ENCODE measurements at regions of chr3 and their contacts with region 1.

Region 1: GRCh38 chr3:150787741-150788370 is 24.9 kb upstream of the SIAH2 start:
- DNase-seq: peak; percentile 58 to 78 (median 65)
- H3K4me3 ChIP-seq: no peak overlapping the region
- H3K4me3 Mint-ChIP-seq: peak overlapping the region in 4 of 8 donors; percentile 0 to 40 (median 22)
- H3K27ac ChIP-seq: no peak overlapping the region
- H3K27ac Mint-ChIP-seq: peak overlapping the region in 1 of 7 donors; percentile 58
- H3K4me1 ChIP-seq: peaks cover 5% of the 10 kb centered on the region
- H3K4me1 Mint-ChIP-seq: peaks cover 0 to 5% (median 4%) of the 10 kb centered on the region in 4 donors
- H3K27me3 ChIP-seq: no peaks in the 10 kb centered on the region
- H3K27me3 Mint-ChIP-seq: peaks cover 4 to 7% of the 10 kb centered on the region in 2 donors

Region 2: GRCh38 chr3:150643049-150643448 is 144.8 kb before region 1 on chr3:
- CTCF ChIA-PET with region 1: no interaction called
- POLR2A ChIA-PET with region 1: no interaction called
- intact Hi-C with region 1: no loop called
- DNase-seq: no peak
- H3K4me3 ChIP-seq: no peak overlapping the region
- H3K4me3 Mint-ChIP-seq: no peak overlapping the region
- H3K27ac ChIP-seq: no peak overlapping the region
- H3K27ac Mint-ChIP-seq: no peak overlapping the region
- H3K4me1 ChIP-seq: no peaks in the 10 kb centered on the region
- H3K4me1 Mint-ChIP-seq: no peaks in the 10 kb centered on the region
- H3K27me3 ChIP-seq: no peaks in the 10 kb centered on the region
- H3K27me3 Mint-ChIP-seq: peaks cover 0 to 2% of the 10 kb centered on the region in 2 donors

Region 3: GRCh38 chr3:150721285-150722130 is 66.3 kb before region 1 on chr3:
- CTCF ChIA-PET with region 1: interaction called, 26 read pairs
- POLR2A ChIA-PET with region 1: interaction called, 3 read pairs
- intact Hi-C with region 1: loop called (anchors 1 kb)
- DNase-seq: peak in 4 of 5 donors; percentile 67 to 75 (median 68)
- H3K4me3 ChIP-seq: no peak overlapping the region
- H3K4me3 Mint-ChIP-seq: peak overlapping the region in 1 of 8 donors; percentile 48
- H3K27ac ChIP-seq: no peak overlapping the region
- H3K27ac Mint-ChIP-seq: peak overlapping the region in 2 of 7 donors; percentile 11 to 53
- H3K4me1 ChIP-seq: peaks cover 12% of the 10 kb centered on the region
- H3K4me1 Mint-ChIP-seq: peaks cover 6 to 11% (median 8%) of the 10 kb centered on the region in 4 donors
- H3K27me3 ChIP-seq: no peaks in the 10 kb centered on the region
- H3K27me3 Mint-ChIP-seq: no peaks in the 10 kb centered on the region

Region 4: DNA sequence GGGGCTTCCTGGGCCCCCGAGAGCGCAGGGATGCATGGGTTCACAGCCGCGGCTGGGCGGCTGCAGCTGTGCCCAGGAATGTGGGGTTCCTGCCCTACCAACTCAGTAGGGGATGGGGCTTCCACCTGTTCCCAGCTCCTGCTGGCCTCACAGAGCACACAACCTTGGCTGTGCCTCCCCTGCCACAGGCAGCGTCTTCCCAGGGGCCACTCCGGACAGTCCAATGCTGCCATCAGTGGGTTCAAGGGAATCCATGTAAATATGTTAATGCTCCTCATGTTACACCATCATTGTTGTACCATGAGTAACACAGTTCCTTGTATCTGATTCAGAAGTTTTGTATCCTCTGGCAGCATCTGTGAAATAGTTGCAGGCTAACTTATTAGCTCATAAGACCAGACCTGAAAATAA is 12.8 kb before region 1 on chr3:
- CTCF ChIA-PET with region 1: interaction called, 17 read pairs
- POLR2A ChIA-PET with region 1: no interaction called
- intact Hi-C with region 1: no loop called
- DNase-seq: no peak
- H3K4me3 ChIP-seq: no peak overlapping the region
- H3K4me3 Mint-ChIP-seq: no peak overlapping the region
- H3K27ac ChIP-seq: no peak overlapping the region
- H3K27ac Mint-ChIP-seq: no peak overlapping the region
- H3K4me1 ChIP-seq: no peaks in the 10 kb centered on the region
- H3K4me1 Mint-ChIP-seq: no peaks in the 10 kb centered on the region
- H3K27me3 ChIP-seq: no peaks in the 10 kb centered on the region
- H3K27me3 Mint-ChIP-seq: no peaks in the 10 kb centered on the region

Region 5: DNA sequence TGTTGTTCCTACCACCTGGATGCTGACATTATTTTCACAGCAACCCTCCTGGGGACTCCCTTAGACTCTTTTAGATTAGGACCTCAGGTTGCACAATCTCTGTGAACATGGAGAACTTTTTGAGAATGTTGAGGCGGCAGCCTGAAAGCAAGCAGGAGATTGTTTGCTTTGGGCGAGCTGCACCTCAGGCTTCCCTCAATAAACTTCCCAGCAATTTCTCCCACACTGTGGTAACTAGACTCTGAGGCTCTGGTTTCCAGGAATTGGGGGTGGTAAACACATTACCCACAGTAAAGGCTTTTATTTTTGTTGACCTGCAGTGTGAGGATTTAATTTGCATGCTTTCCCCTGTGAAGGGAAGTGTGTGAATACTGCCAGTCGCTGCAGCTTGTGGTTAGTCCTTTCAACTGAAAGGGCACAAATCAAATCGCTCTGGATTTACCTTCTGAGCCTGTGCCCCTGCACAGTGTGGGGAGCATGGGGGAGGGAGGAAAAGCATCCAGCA is 10.3 kb after region 1 on chr3:
- CTCF ChIA-PET with region 1: interaction called, 20 read pairs
- POLR2A ChIA-PET with region 1: no interaction called
- intact Hi-C with region 1: no loop called
- DNase-seq: no peak
- H3K4me3 ChIP-seq: no peak overlapping the region
- H3K4me3 Mint-ChIP-seq: no peak overlapping the region
- H3K27ac ChIP-seq: no peak overlapping the region
- H3K27ac Mint-ChIP-seq: no peak overlapping the region
- H3K4me1 ChIP-seq: no peaks in the 10 kb centered on the region
- H3K4me1 Mint-ChIP-seq: peaks cover 0 to 5% (median 1%) of the 10 kb centered on the region in 4 donors
- H3K27me3 ChIP-seq: no peaks in the 10 kb centered on the region
- H3K27me3 Mint-ChIP-seq: peaks cover 4 to 12% of the 10 kb centered on the region in 2 donors

Region 6: DNA sequence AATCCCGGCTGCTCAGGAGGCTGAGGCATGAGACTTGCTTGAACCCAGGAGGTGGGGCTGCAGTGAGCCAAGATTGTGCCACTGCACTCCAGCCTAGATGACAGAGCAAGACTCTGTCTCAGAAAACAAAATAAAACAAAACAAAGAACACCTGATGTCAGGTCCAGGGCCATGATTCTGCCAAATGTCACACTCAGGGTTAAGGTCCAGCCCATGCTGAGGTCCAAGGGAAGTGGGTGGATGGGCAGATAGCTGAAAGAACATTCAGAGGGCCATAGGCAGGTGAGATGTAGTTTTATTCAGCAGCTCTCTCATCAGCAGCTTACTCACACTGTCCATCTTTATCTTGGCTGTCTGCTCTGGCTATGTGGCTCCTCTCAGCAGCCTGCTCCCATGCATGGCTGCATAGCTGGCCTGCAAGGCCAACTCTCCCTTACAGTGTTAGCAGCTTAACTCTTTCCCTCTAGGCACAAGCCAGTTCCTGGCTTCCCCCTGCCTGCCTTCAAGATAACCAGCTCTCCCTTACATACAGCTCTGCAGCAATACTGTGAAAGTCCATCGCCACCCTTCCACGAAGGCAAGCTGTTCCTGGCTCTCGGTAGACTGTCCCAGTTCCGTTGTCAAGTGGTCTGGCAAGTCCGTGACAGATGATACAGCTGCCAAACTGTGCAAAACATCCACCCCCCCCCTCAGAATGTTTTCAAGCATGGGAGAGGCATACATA is 37.5 kb after region 1 on chr3:
- CTCF ChIA-PET with region 1: interaction called, 16 read pairs
- POLR2A ChIA-PET with region 1: no interaction called
- intact Hi-C with region 1: no loop called
- DNase-seq: no peak
- H3K4me3 ChIP-seq: no peak overlapping the region
- H3K4me3 Mint-ChIP-seq: no peak overlapping the region
- H3K27ac ChIP-seq: no peak overlapping the region
- H3K27ac Mint-ChIP-seq: peak overlapping the region in 1 of 7 donors; percentile 12
- H3K4me1 ChIP-seq: no peaks in the 10 kb centered on the region
- H3K4me1 Mint-ChIP-seq: no peaks in the 10 kb centered on the region
- H3K27me3 ChIP-seq: no peaks in the 10 kb centered on the region
- H3K27me3 Mint-ChIP-seq: peaks cover 6 to 12% of the 10 kb centered on the region in 2 donors

Region 7: GRCh38 chr3:150870396-150870795 is 82.5 kb after region 1 on chr3:
- CTCF ChIA-PET with region 1: interaction called, 16 read pairs
- POLR2A ChIA-PET with region 1: no interaction called
- intact Hi-C with region 1: loop called (anchors 1 kb)
- DNase-seq: no peak
- H3K4me3 ChIP-seq: no peak overlapping the region
- H3K4me3 Mint-ChIP-seq: no peak overlapping the region
- H3K27ac ChIP-seq: no peak overlapping the region
- H3K27ac Mint-ChIP-seq: no peak overlapping the region
- H3K4me1 ChIP-seq: peaks cover 2% of the 10 kb centered on the region
- H3K4me1 Mint-ChIP-seq: peaks cover under 1 to 3% (median 1%) of the 10 kb centered on the region in 4 donors
- H3K27me3 ChIP-seq: no peaks in the 10 kb centered on the region
- H3K27me3 Mint-ChIP-seq: peaks cover 5 to 9% of the 10 kb centered on the region in 2 donors

Region 8: GRCh38 chr3:151146071-151146730 is 358.3 kb after region 1 on chr3:
- CTCF ChIA-PET with region 1: interaction called, 16 read pairs
- POLR2A ChIA-PET with region 1: no interaction called
- intact Hi-C with region 1: loop called (anchors 1 kb)
- DNase-seq: peak; percentile 44 to 52 (median 46)
- H3K4me3 ChIP-seq: no peak overlapping the region
- H3K4me3 Mint-ChIP-seq: no peak overlapping the region
- H3K27ac ChIP-seq: no peak overlapping the region
- H3K27ac Mint-ChIP-seq: peak overlapping the region in 1 of 7 donors; percentile 39
- H3K4me1 ChIP-seq: no peaks in the 10 kb centered on the region
- H3K4me1 Mint-ChIP-seq: no peaks in the 10 kb centered on the region
- H3K27me3 ChIP-seq: no peaks in the 10 kb centered on the region
- H3K27me3 Mint-ChIP-seq: peaks cover 12 to 13% of the 10 kb centered on the region in 2 donors